Stomach (tissue), 19 donors: ENCODE measurements at regions of chr1 and their contacts with region 1.

Region 1: GRCh38 chr1:151156515-151156819 is at the start of gene TNFAIP8L2:
- DNase-seq: peak; percentile 51 to 54
- H3K4me3 ChIP-seq: peak within 1 kb of the TSS; percentile 20 to 45 (median 36)
- H3K27ac ChIP-seq: peak within 1 kb of the TSS in 4 of 5 donors; percentile 3 to 81 (median 65)
- H3K4me1 ChIP-seq: peaks cover 0 to 27% (median 3%) of the 10 kb centered on the region in 4 donors
- H3K27me3 ChIP-seq: no peaks in the 10 kb centered on the region
- CTCF ChIP-seq: no peak
- EP300 ChIP-seq: no peak
- POLR2A ChIP-seq: no peak
- total RNA-seq, gene TNFAIP8L2: 2.0 to 19.4 (median 15.2) TPM in 3 of 5 donors, not detected in the others

Region 2: DNA sequence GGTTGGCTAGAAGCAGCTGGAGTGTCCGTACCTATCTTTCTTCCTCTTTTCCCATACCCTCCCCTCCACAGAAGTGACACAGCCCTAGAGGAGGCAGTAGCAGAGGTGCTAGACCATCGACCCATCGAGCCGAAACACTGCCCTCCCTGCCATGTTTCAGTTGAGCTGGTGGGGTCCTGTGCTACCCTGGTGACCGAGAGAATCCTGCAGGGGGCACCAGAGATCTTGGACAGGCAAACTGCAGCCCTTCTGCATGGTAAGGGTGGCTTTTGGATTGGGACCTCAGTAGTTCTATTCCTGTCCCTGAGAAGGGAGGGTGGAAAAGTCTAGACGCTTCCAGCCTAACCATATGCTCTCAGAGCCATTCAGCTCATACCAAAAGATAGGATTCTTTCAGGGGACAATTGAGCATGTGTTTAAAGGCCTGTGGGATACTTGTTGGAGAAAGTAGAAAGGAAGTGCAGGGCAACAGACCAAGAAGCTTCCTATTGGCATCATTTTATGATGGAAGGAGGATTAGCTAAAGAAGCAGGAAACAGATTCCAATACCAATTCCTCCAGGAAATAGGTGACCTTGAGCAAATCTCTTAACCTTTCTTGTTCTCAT is 131.8 kb before region 1 on chr1:
- intact Hi-C with region 1: loop called (anchors 10 kb)
- DNase-seq: peak; percentile 86 to 90
- H3K4me3 ChIP-seq: no peak overlapping the region
- H3K27ac ChIP-seq: peak overlapping the region in 1 of 5 donors; percentile 57
- H3K4me1 ChIP-seq: peaks cover 0 to 17% (median 4%) of the 10 kb centered on the region in 4 donors
- H3K27me3 ChIP-seq: no peaks in the 10 kb centered on the region
- CTCF ChIP-seq: peak in 5 of 7 experiments; percentile 52 to 74 (median 65)
- EP300 ChIP-seq: no peak
- POLR2A ChIP-seq: no peak

Region 3: GRCh38 chr1:151098126-151098525 is 58.3 kb before region 1 on chr1:
- intact Hi-C with region 1: loop called (anchors 10 kb)
- DNase-seq: no peak
- H3K4me3 ChIP-seq: no peak overlapping the region
- H3K27ac ChIP-seq: no peak overlapping the region
- H3K4me1 ChIP-seq: no peaks in the 10 kb centered on the region
- H3K27me3 ChIP-seq: no peaks in the 10 kb centered on the region
- CTCF ChIP-seq: no peak
- EP300 ChIP-seq: no peak
- POLR2A ChIP-seq: no peak